ENCODE measurements at regions of chr14 and their contacts with region 1.

Region 1: DNA sequence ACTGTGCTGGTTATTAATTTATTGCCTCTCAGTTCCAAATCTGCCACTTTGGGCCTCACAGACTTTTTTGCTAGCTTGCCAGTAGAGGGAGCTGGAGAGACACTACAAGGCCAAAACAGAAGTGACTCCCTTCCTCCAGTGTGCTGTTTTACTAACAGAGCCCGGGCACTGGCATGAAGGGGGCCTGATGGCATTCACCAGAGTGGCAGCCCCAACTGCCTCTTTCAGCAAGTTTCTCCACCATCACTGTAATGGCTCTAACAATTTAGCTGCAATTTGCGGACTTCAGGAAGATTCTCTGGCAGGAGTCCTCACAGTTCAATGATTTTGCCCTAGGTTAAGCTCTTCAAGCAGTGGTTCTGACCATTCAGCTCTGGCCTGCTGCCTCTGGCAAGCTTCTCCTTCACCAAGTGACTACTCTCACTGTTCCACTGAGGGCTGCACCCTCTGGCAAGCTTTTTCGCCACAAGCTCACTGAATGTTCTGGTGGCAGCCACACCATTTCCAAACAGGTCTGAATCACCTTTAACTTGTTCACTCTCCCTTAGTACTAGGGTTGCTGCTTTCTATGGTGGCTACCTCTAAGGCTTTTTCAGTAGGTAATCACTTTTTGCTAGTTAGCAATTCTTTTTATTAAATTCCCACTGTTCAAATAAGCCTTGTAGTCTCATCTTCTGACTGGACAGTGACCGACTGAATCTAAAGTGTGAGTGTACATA is 104.9 kb downstream of the ZC3H14 start:
- DNase-seq: peak; percentile 64
- H3K4me3 ChIP-seq: no peak overlapping the region
- H3K27ac ChIP-seq: no peak overlapping the region
- H3K27me3 ChIP-seq: no peaks in the 10 kb centered on the region
- CTCF ChIP-seq: peak; percentile 97

Region 2: DNA sequence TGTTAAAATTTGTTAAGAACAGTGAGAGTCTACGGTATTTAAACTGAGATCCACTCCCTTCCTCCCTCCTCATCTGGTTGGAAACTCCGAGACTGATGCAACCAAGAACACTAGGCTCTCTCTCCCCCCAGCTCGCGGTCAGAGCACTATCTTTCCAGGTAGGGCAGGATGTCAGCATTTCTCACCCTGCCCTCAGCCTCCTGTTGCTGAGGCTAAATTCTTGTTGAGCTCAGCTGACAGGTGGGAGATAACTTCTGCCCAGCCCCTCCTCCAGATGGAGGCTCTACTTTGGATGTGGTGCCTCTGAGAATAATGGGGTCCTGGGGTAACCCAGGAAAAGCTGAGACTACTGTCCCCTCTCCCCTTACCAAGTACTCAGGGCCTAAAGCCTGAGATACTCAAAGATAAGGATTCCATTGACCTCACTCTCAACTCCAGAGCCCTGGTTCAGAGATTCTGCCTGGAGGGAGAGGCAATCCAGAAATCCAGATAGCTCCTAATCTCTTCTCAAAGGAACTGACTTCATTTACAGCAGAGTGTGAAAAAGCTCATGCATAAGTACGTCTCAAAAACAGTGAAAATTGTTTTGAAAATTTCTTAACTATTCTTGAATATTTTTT is 14.9 kb after region 1 on chr14:
- CTCF ChIA-PET with region 1: interaction called, 24 read pairs
- POLR2A ChIA-PET with region 1: no interaction called
- DNase-seq: no peak
- H3K4me3 ChIP-seq: no peak overlapping the region
- H3K27ac ChIP-seq: no peak overlapping the region
- H3K27me3 ChIP-seq: no peaks in the 10 kb centered on the region
- CTCF ChIP-seq: no peak

Region 3: GRCh38 chr14:88746052-88746451 is 78.3 kb after region 1 on chr14:
- CTCF ChIA-PET with region 1: interaction called, 11 read pairs
- POLR2A ChIA-PET with region 1: no interaction called
- DNase-seq: no peak
- H3K4me3 ChIP-seq: no peak overlapping the region
- H3K27ac ChIP-seq: no peak overlapping the region
- H3K27me3 ChIP-seq: no peaks in the 10 kb centered on the region
- CTCF ChIP-seq: no peak

Region 4: GRCh38 chr14:88868558-88869159 is 200.9 kb after region 1 on chr14:
- CTCF ChIA-PET with region 1: interaction called, 13 read pairs
- POLR2A ChIA-PET with region 1: no interaction called
- DNase-seq: no peak
- H3K4me3 ChIP-seq: no peak overlapping the region
- H3K27ac ChIP-seq: no peak overlapping the region
- H3K27me3 ChIP-seq: no peaks in the 10 kb centered on the region
- CTCF ChIP-seq: 0 out of 2 replicates have a peak, but pooled peaks have one; percentile 36

Region 5: DNA sequence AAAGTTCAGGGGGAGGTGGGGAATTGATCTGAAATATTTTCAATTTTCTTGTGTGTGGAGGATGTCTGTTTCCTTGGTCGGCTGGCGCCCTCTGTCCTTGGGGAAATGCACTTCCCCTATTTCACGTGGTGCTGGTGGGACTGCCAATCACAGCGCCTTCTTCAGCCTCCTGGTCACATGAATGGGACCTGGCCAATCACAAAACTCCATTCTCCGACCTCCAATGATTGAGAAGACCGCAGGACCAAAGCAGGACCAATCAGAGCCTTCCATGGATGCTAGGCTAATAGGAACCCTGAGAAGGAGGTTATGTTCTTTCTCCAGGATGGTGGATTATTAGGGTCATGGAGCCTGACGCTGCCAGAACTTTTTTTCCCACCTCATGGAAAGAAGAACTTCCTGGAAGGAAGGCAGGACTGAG is 345.4 kb after region 1 on chr14:
- CTCF ChIA-PET with region 1: interaction called, 12 read pairs
- POLR2A ChIA-PET with region 1: no interaction called
- DNase-seq: no peak
- H3K4me3 ChIP-seq: no peak overlapping the region
- H3K27ac ChIP-seq: no peak overlapping the region
- H3K27me3 ChIP-seq: no peaks in the 10 kb centered on the region
- CTCF ChIP-seq: peak; percentile 19; the same call in 1 of the 2 replicates

Region 6: GRCh38 chr14:89308232-89308959 is 640.7 kb after region 1 on chr14:
- CTCF ChIA-PET with region 1: no interaction called
- POLR2A ChIA-PET with region 1: no interaction called
- DNase-seq: no peak
- H3K4me3 ChIP-seq: no peak overlapping the region
- H3K27ac ChIP-seq: no peak overlapping the region
- H3K27me3 ChIP-seq: no peaks in the 10 kb centered on the region
- CTCF ChIP-seq: no peak

Measured in AG04450 (cell line).